WTC11 (cell line): ENCODE measurements at regions of chr15 and their contacts with region 1.

Region 1: GRCh38 chr15:31977812-31978661 is 52.3 kb upstream of the CHRNA7 start:
- DNase-seq: peak; percentile 88
- ATAC-seq: peak; percentile 79
- H3K4me3 Mint-ChIP-seq: peak overlapping the region; percentile 23
- H3K27ac Mint-ChIP-seq: no peak overlapping the region
- H3K4me1 Mint-ChIP-seq: peaks cover 27% of the 10 kb centered on the region
- H3K27me3 Mint-ChIP-seq: peaks cover 15% of the 10 kb centered on the region
- CTCF ChIP-seq: peak; percentile 89

Region 2: GRCh38 chr15:31870328-31871165 is 107.5 kb before region 1 on chr15:
- CTCF ChIA-PET with region 1: interaction called, 10 read pairs
- POLR2A ChIA-PET with region 1: no interaction called
- DNase-seq: peak; percentile 84
- ATAC-seq: peak; percentile 82
- H3K4me3 Mint-ChIP-seq: peak within 1 kb of the TSS; percentile 78
- H3K27ac Mint-ChIP-seq: peak within 1 kb of the TSS; percentile 86
- H3K4me1 Mint-ChIP-seq: peaks cover 18% of the 10 kb centered on the region
- H3K27me3 Mint-ChIP-seq: peaks cover 20% of the 10 kb centered on the region
- CTCF ChIP-seq: no peak

Region 3: GRCh38 chr15:31905054-31905453 is 73.0 kb before region 1 on chr15:
- CTCF ChIA-PET with region 1: interaction called, 20 read pairs
- POLR2A ChIA-PET with region 1: no interaction called
- DNase-seq: peak; percentile 31
- ATAC-seq: peak; percentile 97
- H3K4me3 Mint-ChIP-seq: peak overlapping the region; percentile 2; the same call in 1 of the 2 replicates
- H3K27ac Mint-ChIP-seq: no peak overlapping the region; the same call in 1 of the 2 replicates
- H3K4me1 Mint-ChIP-seq: peaks cover 25% of the 10 kb centered on the region
- H3K27me3 Mint-ChIP-seq: no peaks in the 10 kb centered on the region
- CTCF ChIP-seq: no peak

Region 4: DNA sequence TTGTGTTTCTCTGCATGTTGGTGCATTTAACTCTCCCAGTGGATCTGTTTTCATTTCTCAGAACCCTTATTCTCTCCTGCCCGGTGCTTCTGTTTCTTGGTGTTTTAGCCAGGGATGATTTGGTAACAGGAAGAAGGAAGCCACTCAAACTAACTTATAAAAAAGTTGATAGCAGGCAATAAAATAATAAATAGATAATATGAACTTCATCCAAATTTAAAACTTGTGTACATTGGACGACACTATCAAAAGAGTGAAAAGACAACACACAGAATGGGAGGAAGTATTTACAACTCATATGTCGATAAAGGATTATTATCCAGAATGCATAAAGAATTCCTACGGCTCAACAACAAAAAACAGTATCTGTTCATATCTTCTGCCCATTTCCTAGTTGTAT is 15.0 kb after region 1 on chr15:
- CTCF ChIA-PET with region 1: interaction called, 62 read pairs
- POLR2A ChIA-PET with region 1: no interaction called
- DNase-seq: no peak
- ATAC-seq: no peak
- H3K4me3 Mint-ChIP-seq: no peak overlapping the region
- H3K27ac Mint-ChIP-seq: no peak overlapping the region
- H3K4me1 Mint-ChIP-seq: no peaks in the 10 kb centered on the region
- H3K27me3 Mint-ChIP-seq: no peaks in the 10 kb centered on the region
- CTCF ChIP-seq: no peak

Region 5: DNA sequence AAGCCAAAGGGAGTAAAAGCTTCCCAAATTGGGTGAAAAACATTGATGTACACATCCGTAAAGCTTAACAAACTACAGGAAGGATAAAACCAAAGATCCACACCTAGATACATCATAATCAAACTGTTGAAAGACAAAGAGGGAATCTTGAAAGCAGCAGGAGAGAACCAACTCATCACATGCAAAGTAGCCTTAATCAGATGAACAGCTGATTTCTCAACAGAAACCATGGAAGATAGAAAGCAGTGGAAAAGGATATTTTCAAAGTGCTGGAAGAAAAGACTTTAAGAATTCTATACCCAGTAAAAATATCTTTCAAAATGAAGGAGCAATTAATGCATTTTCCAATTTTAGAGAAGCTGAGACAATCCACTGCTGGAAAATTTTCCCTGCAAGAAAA is 89.1 kb after region 1 on chr15:
- CTCF ChIA-PET with region 1: no interaction called
- POLR2A ChIA-PET with region 1: no interaction called
- DNase-seq: no peak
- ATAC-seq: no peak
- H3K4me3 Mint-ChIP-seq: no peak overlapping the region
- H3K27ac Mint-ChIP-seq: no peak overlapping the region
- H3K4me1 Mint-ChIP-seq: peaks cover 3% of the 10 kb centered on the region; the same call in 1 of the 2 replicates
- H3K27me3 Mint-ChIP-seq: 0 out of 2 replicates have a peak, but pooled peaks cover 2% of the 10 kb centered on the region
- CTCF ChIP-seq: no peak

Region 6: GRCh38 chr15:32134842-32135241 is 156.8 kb after region 1 on chr15:
- CTCF ChIA-PET with region 1: interaction called, 12 read pairs
- POLR2A ChIA-PET with region 1: no interaction called
- DNase-seq: no peak
- ATAC-seq: no peak
- H3K4me3 Mint-ChIP-seq: no peak overlapping the region
- H3K27ac Mint-ChIP-seq: no peak overlapping the region
- H3K4me1 Mint-ChIP-seq: no peaks in the 10 kb centered on the region
- H3K27me3 Mint-ChIP-seq: no peaks in the 10 kb centered on the region
- CTCF ChIP-seq: no peak